ENCODE measurements at regions of chr11 and their contacts with region 1.

Region 1: GRCh38 chr11:96342961-96343711 is at the start of gene MAML2:
- DNase-seq: peak; percentile 91
- H3K4me3 ChIP-seq: peak within 1 kb of the TSS; percentile 59 to 98 (median 94)
- H3K27ac ChIP-seq: peak within 1 kb of the TSS; percentile 88
- H3K4me1 ChIP-seq: peaks cover 30% of the 10 kb centered on the region
- H3K27me3 ChIP-seq: no peaks in the 10 kb centered on the region
- CTCF ChIP-seq: peak; percentile 76 to 96
- POLR2A ChIP-seq: no peak
- total RNA-seq, gene MAML2: 16.8 and 17.1 TPM in 2 replicates

Region 2: GRCh38 chr11:95584589-95584988 is 758.5 kb before region 1 on chr11:
- CTCF ChIA-PET with region 1: no interaction called
- POLR2A ChIA-PET with region 1: no interaction called
- dilution Hi-C with region 1: no loop called
- intact Hi-C with region 1: no loop called
- DNase-seq: no peak
- H3K4me3 ChIP-seq: no peak overlapping the region
- H3K27ac ChIP-seq: no peak overlapping the region
- H3K4me1 ChIP-seq: no peaks in the 10 kb centered on the region
- H3K27me3 ChIP-seq: no peaks in the 10 kb centered on the region
- CTCF ChIP-seq: no peak
- POLR2A ChIP-seq: no peak

Region 3: GRCh38 chr11:95835768-95836488 is 507.2 kb before region 1 on chr11:
- CTCF ChIA-PET with region 1: interaction called, 68 read pairs
- POLR2A ChIA-PET with region 1: interaction called, 3 read pairs
- dilution Hi-C with region 1: no loop called
- intact Hi-C with region 1: loop called (anchors 1 kb)
- DNase-seq: peak; percentile 77
- H3K4me3 ChIP-seq: no peak overlapping the region
- H3K27ac ChIP-seq: no peak overlapping the region
- H3K4me1 ChIP-seq: no peaks in the 10 kb centered on the region
- H3K27me3 ChIP-seq: no peaks in the 10 kb centered on the region
- CTCF ChIP-seq: peak; percentile 71 to 88
- POLR2A ChIP-seq: no peak

Region 4: DNA sequence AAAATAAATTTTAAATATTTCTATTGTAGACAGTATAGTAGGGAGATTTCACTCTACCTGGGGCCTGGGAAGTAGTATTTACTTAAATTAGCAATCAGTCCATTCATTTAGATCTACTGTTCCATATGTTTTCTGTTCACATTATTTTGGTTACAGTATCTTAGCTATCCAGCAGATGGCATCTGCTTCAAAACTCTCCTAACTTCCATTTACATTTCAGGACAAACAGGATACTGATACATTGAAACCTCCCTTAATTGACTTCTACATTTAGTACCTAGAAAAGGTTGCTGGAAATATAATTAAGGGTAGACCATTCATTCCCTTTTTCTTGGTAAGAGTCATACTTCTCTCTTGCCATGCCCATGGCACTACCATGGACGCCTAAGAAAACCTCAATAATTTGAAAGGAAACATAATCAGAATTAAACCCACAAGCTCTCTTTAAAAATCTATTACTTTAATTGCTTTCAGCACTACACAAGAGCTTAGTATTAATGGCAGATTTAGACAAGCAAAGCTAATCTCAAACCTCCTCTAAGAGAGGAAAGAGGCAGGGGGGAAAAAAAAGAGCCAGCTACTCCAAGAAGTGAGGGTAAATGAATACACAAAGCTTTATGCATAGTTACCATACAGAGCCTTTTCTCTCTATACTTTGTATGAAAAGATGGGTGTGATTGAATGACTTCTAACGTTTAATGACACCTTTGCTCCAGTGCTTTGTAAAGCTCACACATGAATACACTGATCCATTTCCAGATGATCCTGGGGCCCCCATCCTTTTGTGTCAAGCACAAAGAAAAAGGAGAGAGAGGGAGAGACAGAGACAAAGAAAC is 288.0 kb before region 1 on chr11:
- CTCF ChIA-PET with region 1: interaction called, 215 read pairs
- POLR2A ChIA-PET with region 1: interaction called, 6 read pairs
- dilution Hi-C with region 1: no loop called
- intact Hi-C with region 1: loop called (anchors 1 kb)
- DNase-seq: peak; percentile 71
- H3K4me3 ChIP-seq: no peak overlapping the region
- H3K27ac ChIP-seq: no peak overlapping the region
- H3K4me1 ChIP-seq: peaks cover 14% of the 10 kb centered on the region
- H3K27me3 ChIP-seq: no peaks in the 10 kb centered on the region
- CTCF ChIP-seq: peak; percentile 37 to 39
- POLR2A ChIP-seq: no peak

Region 5: GRCh38 chr11:96143016-96143670 is 200.0 kb before region 1 on chr11:
- CTCF ChIA-PET with region 1: interaction called, 20 read pairs
- POLR2A ChIA-PET with region 1: no interaction called
- dilution Hi-C with region 1: no loop called
- intact Hi-C with region 1: no loop called
- DNase-seq: peak; percentile 56
- H3K4me3 ChIP-seq: no peak overlapping the region
- H3K27ac ChIP-seq: no peak overlapping the region
- H3K4me1 ChIP-seq: peaks cover 46% of the 10 kb centered on the region
- H3K27me3 ChIP-seq: no peaks in the 10 kb centered on the region
- CTCF ChIP-seq: no peak
- POLR2A ChIP-seq: no peak

Region 6: DNA sequence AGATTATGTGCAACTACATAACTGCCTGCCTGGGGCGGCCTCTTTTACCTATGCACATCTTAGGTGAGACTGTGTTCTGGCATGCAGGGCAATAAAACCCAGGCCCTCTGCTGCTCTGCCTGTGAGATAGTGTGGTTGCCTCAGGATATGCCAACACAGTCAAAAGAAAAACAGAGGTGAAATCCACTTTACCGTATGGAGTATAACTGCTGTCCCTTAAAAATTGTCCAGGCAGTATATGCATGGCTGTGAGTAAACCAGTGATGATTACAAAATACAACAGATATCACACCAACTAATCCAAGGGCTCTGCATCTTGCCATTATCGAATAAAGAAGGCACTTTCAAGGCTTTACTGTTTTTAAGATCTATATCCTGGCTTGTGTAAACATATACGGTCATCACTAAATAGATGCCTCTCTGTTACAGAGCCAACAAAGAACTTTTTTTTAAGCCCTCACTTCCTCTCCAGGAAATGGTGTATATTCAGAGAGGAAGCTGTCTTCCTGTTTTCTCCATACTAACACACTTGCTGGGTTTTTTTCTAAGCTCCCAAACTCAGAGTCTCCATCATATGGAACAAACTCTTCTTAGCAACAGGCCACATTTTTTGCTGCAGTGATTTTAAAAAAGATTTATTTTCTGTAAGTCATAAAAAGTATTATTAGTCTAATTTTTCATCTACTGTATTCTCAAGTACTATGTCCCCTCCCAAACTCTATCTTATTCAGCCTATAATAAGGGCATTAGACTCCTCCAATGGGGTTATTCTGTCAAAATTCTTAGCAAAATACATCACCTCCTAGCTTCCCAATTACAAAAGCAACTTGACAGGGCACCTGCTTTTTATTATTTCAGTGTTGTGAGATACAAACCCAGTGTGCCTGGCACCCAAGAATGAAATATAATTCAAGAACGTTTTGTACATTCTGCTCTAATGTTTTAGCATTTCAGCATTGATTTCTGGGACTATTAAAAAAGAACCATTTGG is 135.4 kb before region 1 on chr11:
- CTCF ChIA-PET with region 1: interaction called, 28 read pairs
- POLR2A ChIA-PET with region 1: no interaction called
- dilution Hi-C with region 1: no loop called
- intact Hi-C with region 1: loop called (anchors 1 kb)
- DNase-seq: peak; percentile 89
- H3K4me3 ChIP-seq: peak overlapping the region in 1 of 3 experiments; percentile 42
- H3K27ac ChIP-seq: peak overlapping the region; percentile 94
- H3K4me1 ChIP-seq: peaks cover 48% of the 10 kb centered on the region
- H3K27me3 ChIP-seq: no peaks in the 10 kb centered on the region
- CTCF ChIP-seq: no peak
- POLR2A ChIP-seq: peak; percentile 72

Region 7: DNA sequence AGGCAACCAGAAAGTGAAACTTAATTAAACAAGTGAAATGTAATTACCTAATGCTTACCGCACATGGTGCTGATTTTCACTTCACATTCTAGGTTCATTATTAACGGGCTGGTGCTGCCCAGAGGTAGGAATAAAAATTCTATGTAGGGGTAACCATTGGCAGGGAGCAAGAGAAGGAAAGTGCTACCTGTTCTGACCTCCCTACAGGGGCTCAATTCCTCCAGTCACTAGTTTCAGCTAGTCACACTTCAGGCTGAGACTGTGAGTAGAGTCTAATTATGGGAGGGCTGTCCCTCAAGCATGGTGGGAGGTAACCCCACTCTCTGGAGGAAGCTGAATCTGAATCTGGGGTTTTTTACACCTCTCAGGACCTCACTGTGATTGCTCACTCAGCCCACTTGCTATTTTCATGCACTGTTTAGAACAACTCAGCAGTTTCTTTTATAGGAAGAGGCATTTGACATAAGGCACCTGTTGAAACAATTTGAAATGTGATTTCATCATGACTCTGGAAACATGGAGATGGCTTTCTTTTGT is 75.6 kb before region 1 on chr11:
- CTCF ChIA-PET with region 1: interaction called, 39 read pairs
- POLR2A ChIA-PET with region 1: no interaction called
- dilution Hi-C with region 1: no loop called
- intact Hi-C with region 1: no loop called
- DNase-seq: no peak
- H3K4me3 ChIP-seq: no peak overlapping the region
- H3K27ac ChIP-seq: peak overlapping the region; percentile 1
- H3K4me1 ChIP-seq: peaks cover 33% of the 10 kb centered on the region
- H3K27me3 ChIP-seq: no peaks in the 10 kb centered on the region
- CTCF ChIP-seq: no peak
- POLR2A ChIP-seq: no peak

Region 8: GRCh38 chr11:96389720-96390487 is 46.8 kb after region 1 on chr11 and contains the starts of genes CCDC82 and JRKL:
- CTCF ChIA-PET with region 1: interaction called, 31 read pairs
- POLR2A ChIA-PET with region 1: interaction called, 3 read pairs
- dilution Hi-C with region 1: no loop called
- intact Hi-C with region 1: loop called (anchors 2 kb)
- DNase-seq: peak; percentile 96
- H3K4me3 ChIP-seq: peak within 1 kb of the TSS; percentile 84 to 98 (median 94)
- H3K27ac ChIP-seq: peak within 1 kb of the TSS; percentile 61
- H3K4me1 ChIP-seq: peaks cover 19% of the 10 kb centered on the region
- H3K27me3 ChIP-seq: no peaks in the 10 kb centered on the region
- CTCF ChIP-seq: no peak
- POLR2A ChIP-seq: no peak
- total RNA-seq, gene CCDC82: 32.8 and 33.4 TPM in 2 replicates
- total RNA-seq, gene JRKL: 7.0 and 7.6 TPM in 2 replicates